A549 (cell line): ENCODE measurements at regions of chr18 and their contacts with region 1.

Region 1: GRCh38 chr18:70373042-70373519 is 84.2 kb downstream of the SOCS6 start:
- DNase-seq: peak; percentile 48 to 97
- ATAC-seq: peak; percentile 73 to 86
- H3K4me3 ChIP-seq: no peak overlapping the region
- H3K27ac ChIP-seq: peak overlapping the region; percentile 97
- H3K4me1 ChIP-seq: peaks cover 80% of the 10 kb centered on the region
- CTCF ChIP-seq: no peak
- EP300 ChIP-seq: peak; percentile 99 to 100
- POLR2A ChIP-seq: no peak
- RAD21 ChIP-seq: peak; percentile 19 to 69; a peak in 4 of 5 replicates

Region 2: DNA sequence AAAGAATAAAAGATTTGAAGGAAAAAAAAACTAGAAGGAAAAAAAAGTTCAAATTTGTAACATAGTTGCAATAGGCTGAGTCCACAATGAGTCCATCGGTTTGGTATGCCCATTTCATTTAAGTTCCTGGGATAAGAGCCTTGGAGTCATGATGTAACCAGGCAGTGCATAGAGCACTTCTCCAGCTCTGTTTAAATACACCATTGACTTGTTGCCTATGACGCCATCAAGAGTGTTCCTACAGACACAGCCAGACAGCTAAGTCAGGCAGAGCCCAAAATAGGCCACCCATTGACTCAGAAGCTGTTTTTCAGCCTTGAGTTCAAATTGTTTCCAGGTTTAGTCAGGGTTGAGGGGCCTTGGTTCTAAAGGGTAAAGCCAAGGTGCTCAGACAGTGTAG is 39.3 kb before region 1 on chr18:
- CTCF ChIA-PET with region 1: no interaction called
- POLR2A ChIA-PET with region 1: interaction called, 10 read pairs
- DNase-seq: peak; percentile 18 to 90
- ATAC-seq: peak; percentile 83 to 84
- H3K4me3 ChIP-seq: no peak overlapping the region
- H3K27ac ChIP-seq: peak overlapping the region; percentile 88 to 93
- H3K4me1 ChIP-seq: peaks cover 74% of the 10 kb centered on the region
- CTCF ChIP-seq: no peak
- EP300 ChIP-seq: peak; percentile 78 to 86; a peak in 3 of 5 replicates
- POLR2A ChIP-seq: no peak
- RAD21 ChIP-seq: no peak; a peak in 1 of 5 replicates

Region 3: GRCh38 chr18:70355620-70356385 is 17.3 kb before region 1 on chr18:
- CTCF ChIA-PET with region 1: interaction called, 7 read pairs
- POLR2A ChIA-PET with region 1: interaction called, 32 read pairs
- DNase-seq: no peak
- ATAC-seq: no peak
- H3K4me3 ChIP-seq: no peak overlapping the region
- H3K27ac ChIP-seq: peak overlapping the region; percentile 97
- H3K4me1 ChIP-seq: peaks cover 28% of the 10 kb centered on the region
- CTCF ChIP-seq: no peak
- EP300 ChIP-seq: no peak
- POLR2A ChIP-seq: no peak
- RAD21 ChIP-seq: no peak

Region 4: GRCh38 chr18:70384181-70384790 is 11.2 kb after region 1 on chr18:
- CTCF ChIA-PET with region 1: interaction called, 5 read pairs
- POLR2A ChIA-PET with region 1: interaction called, 21 read pairs
- DNase-seq: peak; percentile 31 to 91
- ATAC-seq: peak; percentile 89 to 99
- H3K4me3 ChIP-seq: peak overlapping the region; percentile 15; the same call in 2 of the 3 replicates
- H3K27ac ChIP-seq: peak overlapping the region; percentile 97 to 98
- H3K4me1 ChIP-seq: peaks cover 62% of the 10 kb centered on the region
- CTCF ChIP-seq: no peak
- EP300 ChIP-seq: peak; percentile 34 to 69; a peak in 3 of 5 replicates
- POLR2A ChIP-seq: no peak
- RAD21 ChIP-seq: peak in 1 of 2 experiments; percentile 15; a peak in 2 of 5 replicates

Region 5: DNA sequence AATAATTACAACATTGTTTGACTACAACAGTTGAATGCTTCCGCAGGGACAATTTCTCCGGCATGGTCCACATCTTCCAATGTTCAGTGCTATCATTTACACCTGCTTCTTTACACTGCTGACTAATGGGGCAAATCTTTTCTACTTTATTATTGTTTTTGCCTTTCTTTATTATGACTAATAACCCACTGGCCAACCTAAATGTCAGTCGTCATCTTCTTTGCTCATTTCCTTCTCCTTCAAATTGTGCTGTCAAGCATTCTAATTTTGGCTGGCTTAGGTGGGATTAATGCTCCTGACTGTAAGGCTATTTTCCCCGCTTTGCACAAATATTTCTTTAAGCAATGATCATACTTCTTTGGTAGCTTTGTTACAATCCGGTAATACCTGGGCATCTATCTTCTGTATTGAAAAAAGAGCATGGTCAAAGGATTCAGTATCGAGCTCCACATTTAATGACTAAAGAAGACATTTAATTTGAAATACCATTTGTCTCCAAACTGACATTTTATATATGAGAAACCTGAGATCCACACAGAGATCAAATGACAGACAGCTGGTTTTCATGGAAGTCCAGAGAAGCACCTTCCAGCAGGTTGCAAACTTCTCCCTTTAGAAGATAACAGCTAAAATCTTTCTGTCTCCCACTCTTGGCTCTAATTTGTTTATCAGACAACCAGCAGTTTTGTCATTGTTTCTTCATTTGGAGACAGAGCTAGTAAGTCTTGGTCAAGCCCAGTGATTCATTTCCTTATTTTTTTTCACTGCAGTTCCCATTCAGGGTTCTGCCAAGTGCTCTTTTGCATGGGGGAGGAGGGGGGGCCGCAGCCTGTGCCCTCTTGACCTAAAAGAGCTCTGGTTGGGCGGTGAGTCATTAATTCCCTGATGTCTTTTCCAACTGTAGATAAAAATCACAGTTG is 48.6 kb after region 1 on chr18:
- CTCF ChIA-PET with region 1: interaction called, 9 read pairs
- POLR2A ChIA-PET with region 1: interaction called, 36 read pairs
- DNase-seq: peak; percentile 67 to 96
- ATAC-seq: peak; percentile 87 to 92
- H3K4me3 ChIP-seq: no peak overlapping the region
- H3K27ac ChIP-seq: peak overlapping the region; percentile 93 to 100
- H3K4me1 ChIP-seq: peaks cover 59% of the 10 kb centered on the region
- CTCF ChIP-seq: no peak
- EP300 ChIP-seq: peak; percentile 92 to 96; a peak in 4 of 5 replicates
- POLR2A ChIP-seq: no peak
- RAD21 ChIP-seq: peak; percentile 37 to 58; a peak in 4 of 5 replicates

Region 6: GRCh38 chr18:70431203-70431624 is 58.1 kb after region 1 on chr18:
- CTCF ChIA-PET with region 1: interaction called, 21 read pairs
- POLR2A ChIA-PET with region 1: interaction called, 6 read pairs
- DNase-seq: peak; percentile 78 to 98
- ATAC-seq: peak; percentile 86 to 97
- H3K4me3 ChIP-seq: no peak overlapping the region
- H3K27ac ChIP-seq: peak overlapping the region; percentile 93 to 100
- H3K4me1 ChIP-seq: peaks cover 41% of the 10 kb centered on the region
- CTCF ChIP-seq: no peak
- EP300 ChIP-seq: peak; percentile 100
- POLR2A ChIP-seq: no peak
- RAD21 ChIP-seq: peak; percentile 34 to 77